ENCODE measurements at regions of chr3 and their contacts with region 1.

Region 1: DNA sequence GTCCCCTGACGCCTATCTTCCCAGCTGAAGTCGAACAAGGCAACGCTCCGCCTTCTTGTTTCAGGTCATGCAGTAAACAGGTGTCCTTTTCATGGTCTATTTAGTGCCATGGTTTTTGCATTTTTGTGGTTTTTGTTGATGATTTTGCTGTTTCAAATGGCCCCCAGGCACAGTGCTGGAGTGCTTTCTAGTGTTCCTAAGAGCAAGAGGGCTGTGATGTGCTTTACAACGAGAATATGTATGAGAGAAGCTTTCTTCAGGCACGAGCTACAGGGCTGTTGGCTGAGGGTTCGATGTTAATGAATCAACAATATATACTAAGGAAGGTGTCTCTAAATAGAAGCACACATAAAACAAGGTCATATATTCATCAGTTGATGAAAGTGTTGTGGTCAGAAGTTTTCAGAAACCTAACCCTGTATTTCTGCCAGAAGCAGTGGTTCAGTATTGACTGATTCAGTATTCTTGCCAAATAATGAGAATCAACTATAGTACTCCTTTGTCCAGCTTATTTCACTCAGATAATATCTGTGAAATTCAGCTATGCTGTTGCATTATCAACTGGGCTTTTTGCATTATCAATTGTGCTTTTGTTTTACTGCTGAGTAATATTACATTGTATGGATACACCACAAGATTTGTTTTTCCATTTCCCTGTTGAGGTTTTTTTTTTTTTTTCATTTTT is 18.5 kb downstream of the LIMD1 start:
- DNase-seq: no peak
- H3K4me3 ChIP-seq: no peak overlapping the region
- H3K27ac ChIP-seq: peak overlapping the region in 1 of 2 donors; percentile 14
- H3K4me1 ChIP-seq: peaks cover 0 to 95% (median 64%) of the 10 kb centered on the region in 4 donors
- H3K27me3 ChIP-seq: no peaks in the 10 kb centered on the region
- CTCF ChIP-seq: no peak

Region 2: GRCh38 chr3:45647148-45647619 is 34.1 kb after region 1 on chr3:
- intact Hi-C with region 1: loop called (anchors 5 kb)
- DNase-seq: peak; percentile 30 to 75
- H3K4me3 ChIP-seq: no peak overlapping the region
- H3K27ac ChIP-seq: peak overlapping the region; percentile 73 to 80
- H3K4me1 ChIP-seq: peaks cover 0 to 66% (median 50%) of the 10 kb centered on the region in 4 donors
- H3K27me3 ChIP-seq: no peaks in the 10 kb centered on the region
- CTCF ChIP-seq: no peak

Region 3: DNA sequence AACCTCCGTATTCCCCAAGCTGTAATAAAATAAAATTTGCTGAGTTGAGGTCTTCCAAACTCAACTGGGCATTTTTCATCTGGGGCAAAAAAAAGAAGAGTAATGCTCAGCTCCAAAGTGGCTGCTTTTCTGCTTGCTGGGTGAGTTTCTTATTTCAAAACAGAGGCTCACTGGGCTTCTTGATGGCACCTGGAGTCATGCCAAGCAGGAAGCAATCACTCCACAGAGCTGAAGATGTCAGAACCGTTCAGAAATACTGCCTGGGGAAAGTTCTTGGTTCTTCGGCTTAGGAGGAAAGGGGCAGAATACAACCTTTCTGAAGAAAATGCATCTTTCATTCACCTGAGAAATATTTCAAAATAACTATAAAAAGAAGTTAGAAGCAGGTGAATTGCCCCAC is 277.3 kb after region 1 on chr3:
- intact Hi-C with region 1: no loop called
- DNase-seq: no peak
- H3K4me3 ChIP-seq: no peak overlapping the region
- H3K27ac ChIP-seq: no peak overlapping the region
- H3K4me1 ChIP-seq: no peaks in the 10 kb centered on the region
- H3K27me3 ChIP-seq: no peaks in the 10 kb centered on the region
- CTCF ChIP-seq: no peak